Activated T-helper 1 cell treated with anti-CD3 and anti-CD28 coated beads, Interleukin-12 subunit alpha, Interleukin-12 subunit beta, Interleukin-2, Interleukin-4 antibody, amounts not matched to agents 30 ng/mL and 10 ng/mL and 1 ng/mL, durations not matched to agents 14 hours and 24 hours and 36 hours (primary cell): ENCODE measurements at regions of chr6 and their contacts with region 1.

Region 1: DNA sequence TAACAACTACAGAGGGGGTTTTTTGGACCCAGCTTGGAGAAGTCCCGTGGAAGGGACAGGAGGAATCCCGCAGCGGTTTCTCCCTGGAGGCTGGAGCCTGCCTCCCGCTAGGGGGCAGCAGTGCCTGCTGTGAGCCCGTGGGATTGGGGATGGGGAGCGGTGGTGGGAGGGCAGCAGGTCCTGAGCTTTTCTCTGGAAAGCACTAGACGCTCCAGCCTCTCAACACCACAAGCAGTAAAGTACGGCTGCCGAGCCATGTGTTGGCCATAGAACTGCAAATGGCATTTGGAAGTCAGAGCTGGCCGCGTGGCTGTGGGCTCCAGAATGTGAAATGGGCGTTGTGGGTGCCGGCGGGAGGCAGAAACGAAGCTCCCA is 47.7 kb downstream of the GMPR start:
- DNase-seq: peak; percentile 8
- H3K4me3 Mint-ChIP-seq: no peak overlapping the region
- H3K27ac Mint-ChIP-seq: no peak overlapping the region
- H3K4me1 Mint-ChIP-seq: no peaks in the 10 kb centered on the region
- H3K27me3 Mint-ChIP-seq: no peaks in the 10 kb centered on the region

Region 2: GRCh38 chr6:16031278-16031981 is 254.7 kb before region 1 on chr6:
- intact Hi-C with region 1: no loop called
- DNase-seq: no peak
- H3K4me3 Mint-ChIP-seq: no peak overlapping the region
- H3K27ac Mint-ChIP-seq: no peak overlapping the region
- H3K4me1 Mint-ChIP-seq: no peaks in the 10 kb centered on the region
- H3K27me3 Mint-ChIP-seq: peaks cover 6% of the 10 kb centered on the region

Region 3: GRCh38 chr6:16345437-16346330 is 59.5 kb after region 1 on chr6:
- intact Hi-C with region 1: no loop called
- DNase-seq: no peak
- H3K4me3 Mint-ChIP-seq: no peak overlapping the region
- H3K27ac Mint-ChIP-seq: no peak overlapping the region
- H3K4me1 Mint-ChIP-seq: peaks cover 10% of the 10 kb centered on the region
- H3K27me3 Mint-ChIP-seq: no peaks in the 10 kb centered on the region

Region 4: DNA sequence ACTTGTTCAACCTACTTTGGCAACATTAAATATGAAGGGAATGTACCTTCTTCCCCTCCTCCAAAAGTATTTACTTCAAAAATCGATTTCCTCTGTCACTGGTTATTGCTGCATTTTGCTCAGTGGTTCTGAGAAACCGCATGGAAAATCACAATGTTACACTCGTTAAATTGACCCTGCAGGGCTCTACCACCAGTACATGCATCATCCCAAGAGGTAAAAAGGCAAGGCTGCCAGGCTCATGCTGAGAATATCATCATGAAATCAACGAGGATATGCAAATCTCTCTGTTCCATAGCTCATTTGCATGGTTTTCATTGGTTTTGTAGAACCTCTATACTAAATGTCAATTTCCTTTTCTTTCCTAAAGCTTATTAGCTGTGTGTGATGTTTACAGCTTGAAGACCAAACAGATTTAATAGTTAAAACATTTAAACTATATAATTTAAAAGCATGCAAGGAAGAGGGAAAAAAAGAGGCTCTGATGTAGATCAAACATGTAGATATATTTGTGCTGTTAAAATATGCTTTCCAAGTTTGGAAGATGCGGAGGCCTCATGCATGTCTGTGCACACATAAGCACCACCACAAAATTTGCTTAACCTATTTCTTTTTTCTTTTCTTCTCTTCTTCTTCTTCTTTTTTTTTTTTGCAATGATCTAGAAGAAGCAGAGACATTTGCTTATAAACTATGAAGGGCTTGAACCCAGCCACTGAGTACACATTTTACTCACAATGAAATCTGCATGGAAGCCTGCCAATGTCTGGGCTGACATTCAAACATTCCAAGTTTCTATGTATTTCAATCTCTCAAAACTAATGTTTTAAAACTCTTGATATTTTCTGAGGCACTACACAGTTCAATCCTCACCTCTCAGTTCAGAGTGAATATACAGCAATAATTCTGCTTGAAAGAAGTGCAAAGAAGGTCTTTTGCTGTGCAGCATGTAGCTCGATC is 146.2 kb after region 1 on chr6:
- intact Hi-C with region 1: no loop called
- DNase-seq: no peak
- H3K4me3 Mint-ChIP-seq: no peak overlapping the region
- H3K27ac Mint-ChIP-seq: peak overlapping the region; percentile 2
- H3K4me1 Mint-ChIP-seq: peaks cover 68% of the 10 kb centered on the region
- H3K27me3 Mint-ChIP-seq: no peaks in the 10 kb centered on the region

Region 5: DNA sequence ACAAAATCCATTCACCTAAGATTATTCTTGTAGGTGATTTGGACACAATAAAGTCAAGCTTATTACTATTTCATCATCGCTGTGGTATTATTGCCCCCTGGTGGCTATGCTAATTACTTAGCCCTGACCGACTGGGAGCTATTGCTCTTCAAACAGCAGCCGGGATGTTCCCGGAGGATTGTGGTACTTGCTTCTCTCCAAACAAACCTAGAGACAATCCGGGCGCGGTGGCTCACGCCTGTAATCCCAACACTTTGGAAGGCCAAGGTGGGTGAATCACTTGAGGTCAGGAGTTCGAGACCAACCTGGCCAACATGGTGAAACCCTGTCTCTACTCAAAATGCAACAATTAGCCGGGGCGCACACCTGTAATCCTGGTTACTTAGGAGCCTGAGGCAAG is 800.3 kb after region 1 on chr6:
- intact Hi-C with region 1: loop called (anchors 10 kb)
- DNase-seq: no peak
- H3K4me3 Mint-ChIP-seq: no peak overlapping the region
- H3K27ac Mint-ChIP-seq: no peak overlapping the region
- H3K4me1 Mint-ChIP-seq: no peaks in the 10 kb centered on the region
- H3K27me3 Mint-ChIP-seq: peaks cover 7% of the 10 kb centered on the region